ENCODE measurements at regions of chr12 and their contacts with region 1.

Region 1: GRCh38 chr12:3225154-3225795 is 148.1 kb downstream of the TSPAN9 start:
- DNase-seq: no peak
- H3K4me3 ChIP-seq: no peak overlapping the region
- H3K27ac ChIP-seq: no peak overlapping the region
- H3K4me1 ChIP-seq: no peaks in the 10 kb centered on the region
- H3K27me3 ChIP-seq: no peaks in the 10 kb centered on the region
- CTCF ChIP-seq: no peak
- POLR2A ChIP-seq: no peak

Region 2: DNA sequence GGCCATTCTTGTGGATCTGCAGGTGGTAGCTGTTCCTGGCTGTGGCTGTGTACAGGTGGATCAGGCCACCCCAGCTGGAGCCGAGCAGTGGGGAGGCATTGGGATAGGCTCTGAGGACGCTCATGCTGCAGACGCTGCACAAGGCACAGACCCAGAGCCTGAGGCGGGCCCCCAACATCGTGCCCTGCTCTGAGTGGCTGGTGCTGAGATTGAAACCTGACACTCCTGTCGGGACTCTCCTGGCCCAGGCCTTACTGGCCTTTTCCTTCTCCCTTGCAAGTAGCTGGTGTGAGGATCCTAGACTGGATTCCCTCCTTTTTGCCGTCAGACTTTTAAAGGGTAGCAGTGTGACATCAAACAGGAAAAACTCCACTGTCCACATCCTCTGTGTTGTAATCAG is 1154.1 kb after region 1 on chr12 and contains the start of gene FGF23:
- intact Hi-C with region 1: loop called (anchors 10 kb)
- DNase-seq: no peak
- H3K4me3 ChIP-seq: no peak within 1 kb of the TSS
- H3K27ac ChIP-seq: no peak within 1 kb of the TSS
- H3K4me1 ChIP-seq: no peaks in the 10 kb centered on the region
- H3K27me3 ChIP-seq: peaks cover 0 to 10% of the 10 kb centered on the region in 2 donors
- CTCF ChIP-seq: no peak
- POLR2A ChIP-seq: no peak
- total RNA-seq, gene FGF23: not detected

Measured in breast epithelium (tissue), 4 donors.